ENCODE measurements at regions of chr12 and their contacts with region 1.

Region 1: GRCh38 chr12:96501139-96501761 is 11.9 kb downstream of the CFAP54 start:
- DNase-seq: peak; percentile 69
- ATAC-seq: peak; percentile 90
- H3K4me3 ChIP-seq: no peak overlapping the region
- H3K27ac ChIP-seq: peak overlapping the region; percentile 62
- H3K4me1 ChIP-seq: peaks cover 33% of the 10 kb centered on the region
- H3K27me3 ChIP-seq: no peaks in the 10 kb centered on the region
- CTCF ChIP-seq: no peak
- EP300 ChIP-seq: no peak
- POLR2A ChIP-seq: no peak
- RAD21 ChIP-seq: no peak

Region 2: DNA sequence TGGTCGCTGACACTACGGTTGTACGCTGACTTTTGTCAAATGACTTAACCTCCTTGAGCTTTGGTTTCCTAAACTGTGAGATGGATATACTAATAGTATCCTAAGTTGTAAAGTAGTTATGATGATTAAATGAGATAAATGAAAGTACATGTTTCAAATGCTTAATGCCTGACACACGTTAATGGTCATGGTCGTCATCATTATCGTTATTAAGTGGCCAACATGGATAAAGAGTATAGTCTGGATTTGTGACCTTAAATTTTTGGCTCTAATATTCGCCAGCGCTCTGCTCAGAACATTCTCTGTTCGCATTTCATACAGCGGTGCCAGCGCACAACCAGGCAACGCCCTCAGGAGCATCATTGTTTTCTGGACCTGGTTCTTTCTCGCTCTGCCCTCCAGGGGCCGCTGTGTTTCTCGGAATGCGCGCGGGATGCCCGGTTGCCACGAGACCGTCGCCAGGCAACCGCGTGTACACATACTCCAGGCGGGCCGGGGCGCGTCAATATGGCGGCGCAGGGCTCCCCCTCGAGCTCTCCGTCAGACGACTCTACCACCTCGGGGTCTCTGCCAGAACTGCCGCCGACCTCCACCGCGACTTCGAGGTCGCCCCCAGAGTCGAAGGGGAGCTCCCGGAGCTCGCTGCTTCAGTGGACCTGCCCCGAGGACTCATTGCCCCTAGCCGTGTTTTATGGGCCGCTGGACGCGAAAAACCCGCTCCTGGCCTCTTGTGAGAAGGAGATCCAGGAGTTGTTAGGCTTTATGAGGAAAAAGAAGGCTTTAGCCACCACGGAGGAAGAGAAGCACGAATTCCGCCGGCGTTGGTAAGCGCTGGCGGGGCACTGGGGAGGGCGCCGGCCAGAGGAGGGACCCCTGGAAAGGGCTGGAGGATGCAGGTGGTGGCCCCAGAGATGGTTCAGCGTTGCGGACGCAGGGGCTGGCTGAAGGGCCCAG is 11.9 kb before region 1 on chr12 and contains the start of gene CFAP54:
- CTCF ChIA-PET with region 1: interaction called, 40 read pairs
- POLR2A ChIA-PET with region 1: interaction called, 3 read pairs
- RAD21 ChIA-PET with region 1: interaction called, 8 read pairs
- SMC1A ChIA-PET with region 1: interaction called, 52 read pairs
- in situ Hi-C with region 1: no loop called
- intact Hi-C with region 1: no loop called
- DNase-seq: peak; percentile 65
- ATAC-seq: peak; percentile 91
- H3K4me3 ChIP-seq: peak within 1 kb of the TSS; percentile 73
- H3K27ac ChIP-seq: no peak within 1 kb of the TSS
- H3K4me1 ChIP-seq: peaks cover 14% of the 10 kb centered on the region
- H3K27me3 ChIP-seq: no peaks in the 10 kb centered on the region
- CTCF ChIP-seq: peak; percentile 88 to 98 (median 91)
- EP300 ChIP-seq: peak; percentile 12 to 40; a peak in 2 of 4 replicates
- POLR2A ChIP-seq: no peak
- RAD21 ChIP-seq: peak; percentile 80
- polyA plus RNA-seq, gene CFAP54: 0.19 to 0.55 TPM

Measured in GM12878 (cell line).